Sciatic nerve (tissue), 2 donors: ENCODE measurements at regions of chr2 and their contacts with region 1.

Region 1: GRCh38 chr2:100121124-100121718 is 21.2 kb downstream of the AFF3 start:
- DNase-seq: no peak
- ATAC-seq: no peak

Region 2: DNA sequence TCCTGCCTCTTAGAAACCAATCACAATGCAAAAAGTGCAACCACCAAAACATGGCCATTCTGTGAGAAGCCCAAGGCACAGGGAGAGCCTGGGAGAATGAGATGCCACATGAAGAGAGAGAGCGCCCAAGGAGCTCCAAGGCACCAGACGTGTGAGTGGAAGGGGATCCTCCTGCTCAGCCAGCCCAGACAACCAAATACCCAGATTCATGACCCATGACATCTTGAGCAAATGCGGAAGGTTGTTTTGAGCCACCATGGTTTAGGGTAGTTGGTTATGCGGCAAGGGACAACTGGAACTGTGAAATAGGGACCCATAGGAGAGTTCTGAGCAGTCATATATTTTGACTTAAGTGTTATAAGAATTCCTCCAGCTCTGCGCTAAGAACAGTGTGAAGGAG is 14.2 kb after region 1 on chr2:
- intact Hi-C with region 1: loop called (anchors 1 kb)
- DNase-seq: no peak
- ATAC-seq: no peak